ENCODE measurements at regions of chr4 and their contacts with region 1.

Region 1: DNA sequence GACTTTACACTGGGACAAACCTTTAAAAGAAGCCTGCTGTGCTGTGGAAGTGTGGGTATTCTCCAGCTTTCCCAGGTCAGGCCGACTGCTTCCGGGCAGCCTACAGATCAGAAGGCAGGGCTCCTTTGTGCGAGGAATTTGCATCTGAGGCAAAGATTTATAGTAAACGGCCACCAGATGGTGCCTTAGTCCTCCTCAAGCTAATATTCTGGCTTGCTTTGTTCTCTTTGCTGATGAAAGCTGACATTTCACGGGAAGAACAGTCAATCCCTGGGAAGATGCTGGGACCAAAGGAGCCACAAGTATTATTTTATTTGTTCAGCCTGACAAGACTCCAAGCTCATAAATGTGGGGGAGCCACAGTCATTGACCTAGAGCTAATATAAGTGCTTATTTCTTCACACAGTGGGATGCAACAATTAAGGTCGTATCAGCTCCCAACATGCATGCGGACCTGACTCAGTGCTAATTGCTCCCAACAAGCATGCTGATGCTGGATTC is 120.7 kb upstream of the TRIM2 start:
- DNase-seq: no peak
- ATAC-seq: peak; percentile 78
- H3K4me3 Mint-ChIP-seq: peak overlapping the region; percentile 67
- H3K27ac Mint-ChIP-seq: peak overlapping the region; percentile 64
- H3K4me1 Mint-ChIP-seq: peaks cover 25% of the 10 kb centered on the region
- H3K27me3 Mint-ChIP-seq: peaks cover 1% of the 10 kb centered on the region
- CTCF ChIP-seq: no peak

Region 2: GRCh38 chr4:152779513-152780266 is 303.8 kb before region 1 on chr4 and contains the starts of genes ARFIP1 and TIGD4:
- CTCF ChIA-PET with region 1: interaction called, 5 read pairs
- POLR2A ChIA-PET with region 1: no interaction called
- intact Hi-C with region 1: loop called (anchors 1 kb)
- DNase-seq: peak; percentile 93
- ATAC-seq: peak; percentile 88
- H3K4me3 Mint-ChIP-seq: peak within 1 kb of the TSS; percentile 97
- H3K27ac Mint-ChIP-seq: peak within 1 kb of the TSS; percentile 92
- H3K4me1 Mint-ChIP-seq: peaks cover 41% of the 10 kb centered on the region
- H3K27me3 Mint-ChIP-seq: no peaks in the 10 kb centered on the region
- CTCF ChIP-seq: no peak
- total RNA-seq, gene ARFIP1: 16.8 and 19.5 TPM in 2 replicates
- total RNA-seq, gene TIGD4: 0.24 and 0.44 TPM in 2 replicates

Region 3: GRCh38 chr4:152937336-152938236 is 145.9 kb before region 1 on chr4:
- CTCF ChIA-PET with region 1: interaction called, 11 read pairs
- POLR2A ChIA-PET with region 1: no interaction called
- intact Hi-C with region 1: loop called (anchors 2 kb)
- DNase-seq: peak; percentile 34
- ATAC-seq: peak; percentile 69
- H3K4me3 Mint-ChIP-seq: peak overlapping the region; percentile 83
- H3K27ac Mint-ChIP-seq: no peak overlapping the region
- H3K4me1 Mint-ChIP-seq: peaks cover 22% of the 10 kb centered on the region
- H3K27me3 Mint-ChIP-seq: peaks cover 57% of the 10 kb centered on the region
- CTCF ChIP-seq: no peak

Region 4: GRCh38 chr4:153127760-153128494 is 44.4 kb after region 1 on chr4:
- CTCF ChIA-PET with region 1: interaction called, 252 read pairs
- POLR2A ChIA-PET with region 1: interaction called, 9 read pairs
- intact Hi-C with region 1: loop called (anchors 1 kb)
- DNase-seq: peak; percentile 50
- ATAC-seq: peak; percentile 82
- H3K4me3 Mint-ChIP-seq: no peak overlapping the region
- H3K27ac Mint-ChIP-seq: no peak overlapping the region
- H3K4me1 Mint-ChIP-seq: peaks cover 2% of the 10 kb centered on the region
- H3K27me3 Mint-ChIP-seq: peaks cover 5% of the 10 kb centered on the region
- CTCF ChIP-seq: peak; percentile 67

Region 5: DNA sequence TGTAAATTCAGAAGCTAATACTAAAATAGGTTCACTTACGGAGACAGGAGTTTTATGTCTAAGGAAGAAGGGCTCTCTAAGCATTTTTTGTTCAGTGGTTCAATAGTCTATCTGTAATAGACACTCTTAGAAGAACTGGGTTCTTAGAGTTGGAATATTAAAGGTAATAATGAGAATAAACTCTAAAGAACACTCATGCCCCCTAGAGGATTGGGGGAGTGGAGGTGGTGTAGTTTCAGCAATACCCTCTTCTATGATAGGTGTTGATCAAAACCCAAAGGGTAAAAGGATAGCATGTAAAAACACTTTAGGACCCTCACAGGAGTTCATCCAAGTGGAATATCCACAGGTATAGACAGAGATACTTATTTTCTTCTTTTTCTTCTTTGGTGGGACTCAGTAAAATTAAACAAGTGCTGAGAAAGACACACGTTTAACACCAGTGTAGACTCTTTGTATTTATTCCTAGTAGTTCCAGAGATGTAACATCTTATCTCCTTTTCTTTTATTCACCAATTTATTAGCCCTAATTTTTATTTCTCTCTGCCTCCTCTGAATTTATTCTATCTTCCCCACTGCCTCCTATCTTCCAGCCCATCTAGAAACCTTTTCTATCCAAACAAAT is 235.3 kb after region 1 on chr4:
- CTCF ChIA-PET with region 1: interaction called, 4 read pairs
- POLR2A ChIA-PET with region 1: no interaction called
- intact Hi-C with region 1: loop called (anchors 1 kb)
- DNase-seq: no peak
- ATAC-seq: peak; percentile 65
- H3K4me3 Mint-ChIP-seq: no peak overlapping the region
- H3K27ac Mint-ChIP-seq: no peak overlapping the region
- H3K4me1 Mint-ChIP-seq: no peaks in the 10 kb centered on the region
- H3K27me3 Mint-ChIP-seq: no peaks in the 10 kb centered on the region
- CTCF ChIP-seq: peak; percentile 27

Region 6: DNA sequence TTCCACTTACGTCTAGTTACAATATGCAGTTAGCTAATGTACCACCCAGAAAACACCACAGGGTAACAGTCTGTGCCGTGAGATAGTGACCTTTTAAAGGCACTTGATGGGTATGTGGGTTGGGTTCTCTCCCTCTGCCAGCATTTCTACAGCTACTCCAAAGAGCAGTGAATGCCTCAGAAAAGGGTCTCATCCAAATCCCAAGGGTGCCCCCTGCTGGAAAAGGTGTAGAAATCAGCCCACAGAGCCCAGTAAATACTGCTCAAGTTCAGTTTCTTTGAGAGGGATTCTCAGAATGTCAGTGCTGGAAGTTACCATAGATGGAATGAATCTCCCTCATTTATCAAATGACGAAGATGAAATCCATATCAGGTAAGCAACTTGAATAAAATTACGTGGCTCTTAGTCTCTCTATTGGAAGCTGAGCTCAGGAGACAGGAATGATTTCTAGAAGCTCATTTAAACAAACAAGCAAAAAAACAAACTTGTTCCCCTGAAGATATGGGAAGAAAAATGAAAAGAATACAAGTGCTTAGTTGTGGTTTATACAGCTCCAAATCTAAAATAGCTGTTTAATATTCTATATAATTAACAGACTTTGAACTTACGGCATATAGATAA is 666.8 kb after region 1 on chr4:
- CTCF ChIA-PET with region 1: interaction called, 3 read pairs
- POLR2A ChIA-PET with region 1: no interaction called
- intact Hi-C with region 1: loop called (anchors 1 kb)
- DNase-seq: no peak
- ATAC-seq: peak; percentile 57
- H3K4me3 Mint-ChIP-seq: no peak overlapping the region
- H3K27ac Mint-ChIP-seq: no peak overlapping the region
- H3K4me1 Mint-ChIP-seq: no peaks in the 10 kb centered on the region
- H3K27me3 Mint-ChIP-seq: peaks cover 13% of the 10 kb centered on the region
- CTCF ChIP-seq: peak; percentile 19